Activated CD4-positive, alpha-beta T cell treated with anti-CD3 and anti-CD28 coated beads, Interleukin-2, amount 10 ng/mL, durations not matched to agents 24 days and 14 days (primary cell): ENCODE measurements at regions of chr22 and their contacts with region 1.

Region 1: DNA sequence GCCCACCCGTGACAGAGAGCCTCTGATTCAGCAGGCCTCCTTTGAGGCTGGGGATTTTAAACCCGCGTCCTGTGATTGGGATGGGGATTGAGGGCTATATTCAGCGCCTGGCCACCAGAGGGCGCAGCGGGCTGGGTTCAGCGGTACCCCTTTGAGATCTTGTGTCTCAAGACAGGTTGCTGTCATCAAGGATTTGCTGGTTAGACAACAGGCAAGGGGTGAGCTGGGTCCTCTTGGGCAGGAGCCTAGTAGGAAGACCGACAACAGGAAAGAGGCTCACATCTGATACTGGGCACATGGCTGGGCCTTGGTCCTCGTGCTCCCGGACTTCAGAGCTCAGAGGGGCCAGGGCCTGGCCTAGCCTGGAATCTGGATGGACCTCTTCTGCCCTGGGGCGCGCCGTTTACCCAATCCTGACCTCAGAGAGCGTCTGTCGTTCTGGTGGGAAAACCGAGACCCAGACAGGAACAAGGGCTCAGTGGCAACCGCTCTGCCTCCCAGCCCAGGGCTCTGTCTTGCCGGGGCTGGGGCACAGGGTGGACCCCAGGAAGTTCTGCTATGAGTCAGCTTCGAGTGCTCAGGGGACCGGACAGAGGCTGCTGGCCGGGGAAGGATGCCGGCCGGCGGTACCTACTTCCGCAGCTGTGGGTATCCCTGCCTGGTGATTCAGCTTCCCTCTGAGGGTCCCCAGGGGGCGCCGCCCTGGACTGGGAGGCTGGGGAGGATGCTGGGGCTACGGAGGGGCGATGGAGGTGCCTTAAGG is 929 bp upstream of the SLC35E4 start:
- DNase-seq: peak; percentile 97
- H3K4me3 Mint-ChIP-seq: peak overlapping the region; percentile 79
- H3K27ac Mint-ChIP-seq: peak overlapping the region; percentile 94
- H3K4me1 Mint-ChIP-seq: peaks cover 27% of the 10 kb centered on the region
- H3K27me3 Mint-ChIP-seq: no peaks in the 10 kb centered on the region

Region 2: DNA sequence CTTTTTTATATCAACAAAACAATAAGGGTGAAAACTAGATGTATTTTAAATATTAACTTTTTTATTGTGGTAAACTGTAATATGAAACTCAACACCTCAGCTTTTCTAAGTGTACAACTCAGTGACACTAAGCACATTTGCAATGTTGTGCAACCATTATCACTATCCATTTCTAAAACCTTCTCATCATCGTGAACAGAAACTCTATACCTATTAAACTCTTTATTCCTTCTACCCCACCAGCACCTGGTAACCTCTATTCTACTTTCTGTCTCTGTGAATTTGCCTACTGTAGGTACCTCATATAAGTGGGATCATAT is 545.0 kb before region 1 on chr22:
- intact Hi-C with region 1: no loop called
- DNase-seq: no peak
- H3K4me3 Mint-ChIP-seq: no peak overlapping the region
- H3K27ac Mint-ChIP-seq: no peak overlapping the region
- H3K4me1 Mint-ChIP-seq: peaks cover 24% of the 10 kb centered on the region
- H3K27me3 Mint-ChIP-seq: no peaks in the 10 kb centered on the region

Region 3: GRCh38 chr22:30386960-30387827 is 247.5 kb before region 1 on chr22 and contains the start of gene RNF215:
- intact Hi-C with region 1: no loop called
- DNase-seq: peak; percentile 96
- H3K4me3 Mint-ChIP-seq: peak within 1 kb of the TSS; percentile 86
- H3K27ac Mint-ChIP-seq: peak within 1 kb of the TSS; percentile 79
- H3K4me1 Mint-ChIP-seq: peaks cover 19% of the 10 kb centered on the region
- H3K27me3 Mint-ChIP-seq: no peaks in the 10 kb centered on the region
- total RNA-seq, gene RNF215: 10.4 and 15.2 TPM in 2 replicates

Region 4: DNA sequence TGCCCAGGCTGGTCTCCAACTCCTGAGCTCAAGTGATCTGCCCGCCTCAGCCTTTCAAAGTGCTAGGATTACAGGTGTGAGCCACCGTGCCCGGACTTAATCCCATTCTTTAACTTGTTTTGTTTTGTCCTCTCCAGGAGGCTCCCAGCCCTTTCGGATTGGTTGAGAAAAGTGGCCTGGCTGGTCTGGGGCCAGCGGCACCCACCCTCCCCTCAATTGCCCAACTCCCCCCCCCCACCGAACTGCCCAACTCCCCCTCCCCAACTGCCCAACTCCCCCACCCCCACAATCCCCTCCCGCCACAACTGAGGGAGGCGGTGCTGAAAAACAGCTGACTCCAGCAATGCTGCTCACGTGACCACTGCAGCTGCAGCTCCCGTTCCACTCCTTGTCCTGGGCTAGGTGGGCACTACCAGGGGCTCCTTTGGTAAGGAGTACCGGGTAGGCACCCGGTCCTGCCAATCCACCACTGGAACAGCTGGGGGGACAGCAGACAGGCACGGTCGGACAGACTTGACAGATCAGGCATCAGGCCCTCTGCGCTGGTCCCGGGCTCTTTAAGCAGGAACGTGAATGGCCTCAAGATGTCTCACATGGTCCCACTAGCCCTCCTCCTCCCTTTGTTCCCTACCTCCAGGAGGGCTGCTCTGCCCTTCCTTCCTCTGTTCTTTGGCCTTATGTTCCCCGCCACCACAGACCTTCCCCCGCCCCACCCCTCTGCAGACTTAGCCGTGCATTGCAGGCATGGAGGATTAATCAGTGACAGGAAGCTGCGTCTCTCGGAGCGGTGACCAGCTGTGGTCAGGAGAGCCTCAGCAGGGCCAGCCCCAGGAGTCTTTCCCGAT is 28.0 kb before region 1 on chr22 and contains the start of gene TCN2:
- intact Hi-C with region 1: loop called (anchors 2 kb)
- DNase-seq: peak; percentile 78
- H3K4me3 Mint-ChIP-seq: peak within 1 kb of the TSS; percentile 86
- H3K27ac Mint-ChIP-seq: peak within 1 kb of the TSS; percentile 85
- H3K4me1 Mint-ChIP-seq: peaks cover 47% of the 10 kb centered on the region
- H3K27me3 Mint-ChIP-seq: no peaks in the 10 kb centered on the region
- total RNA-seq, gene TCN2: 0.35 and 0.45 TPM in 2 replicates

Region 5: GRCh38 chr22:30655532-30655931 is 20.9 kb after region 1 on chr22:
- intact Hi-C with region 1: no loop called
- DNase-seq: no peak
- H3K4me3 Mint-ChIP-seq: no peak overlapping the region
- H3K27ac Mint-ChIP-seq: no peak overlapping the region
- H3K4me1 Mint-ChIP-seq: peaks cover 18% of the 10 kb centered on the region
- H3K27me3 Mint-ChIP-seq: no peaks in the 10 kb centered on the region

Region 6: GRCh38 chr22:30667494-30668385 is 33.1 kb after region 1 on chr22 and contains the start of gene DUSP18:
- intact Hi-C with region 1: loop called (anchors 1 kb)
- DNase-seq: peak; percentile 98
- H3K4me3 Mint-ChIP-seq: peak within 1 kb of the TSS; percentile 93
- H3K27ac Mint-ChIP-seq: peak within 1 kb of the TSS; percentile 92
- H3K4me1 Mint-ChIP-seq: peaks cover 29% of the 10 kb centered on the region
- H3K27me3 Mint-ChIP-seq: peaks cover 2% of the 10 kb centered on the region
- total RNA-seq, gene DUSP18: 8.0 and 10.3 TPM in 2 replicates

Region 7: GRCh38 chr22:30754971-30755756 is 120.5 kb after region 1 on chr22:
- intact Hi-C with region 1: loop called (anchors 1 kb)
- DNase-seq: peak; percentile 88
- H3K4me3 Mint-ChIP-seq: no peak overlapping the region
- H3K27ac Mint-ChIP-seq: no peak overlapping the region
- H3K4me1 Mint-ChIP-seq: peaks cover 2% of the 10 kb centered on the region
- H3K27me3 Mint-ChIP-seq: no peaks in the 10 kb centered on the region

Region 8: DNA sequence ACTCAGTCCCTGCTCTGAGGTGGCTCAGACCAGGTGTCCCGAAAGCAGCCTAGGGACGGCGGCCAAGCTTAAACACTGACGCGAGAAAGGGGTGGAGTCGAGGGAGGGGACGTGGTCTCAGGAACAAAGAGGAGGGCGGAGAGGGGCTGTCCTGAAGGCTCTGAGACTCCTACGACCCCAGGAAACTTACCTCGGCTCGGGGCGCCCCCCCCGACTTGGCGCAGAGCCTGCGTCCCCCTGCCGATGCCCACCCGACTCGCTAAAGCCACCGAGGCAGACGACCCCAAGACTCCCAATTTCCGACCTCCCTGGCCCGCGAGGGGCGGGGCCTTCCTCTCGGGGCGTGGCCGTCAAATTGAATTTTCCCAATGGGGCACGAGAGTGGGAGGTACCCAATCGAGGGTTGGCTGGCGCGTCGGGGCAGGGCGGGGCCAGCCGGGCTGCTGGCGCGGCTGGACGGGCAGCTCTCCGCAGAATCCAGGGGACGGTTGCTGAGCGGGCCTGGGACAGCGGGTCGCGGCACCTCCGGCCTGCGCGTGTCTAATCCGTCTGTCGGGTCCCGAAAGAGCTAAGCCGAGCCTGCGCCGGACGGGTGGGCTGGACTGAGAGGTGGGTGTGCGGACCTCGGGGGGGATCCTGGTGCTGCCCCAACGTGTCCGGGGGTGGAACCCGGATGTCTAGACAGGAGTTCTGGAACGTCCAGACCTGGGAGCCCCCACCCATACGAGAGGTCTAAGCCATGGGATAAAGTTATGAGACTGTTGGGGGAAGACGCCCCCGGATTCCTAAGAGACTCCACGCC is 446.4 kb after region 1 on chr22 and contains the start of gene SMTN:
- intact Hi-C with region 1: loop called (anchors 10 kb)
- DNase-seq: peak; percentile 98
- H3K4me3 Mint-ChIP-seq: peak within 1 kb of the TSS; percentile 91
- H3K27ac Mint-ChIP-seq: peak within 1 kb of the TSS; percentile 78
- H3K4me1 Mint-ChIP-seq: peaks cover 35% of the 10 kb centered on the region
- H3K27me3 Mint-ChIP-seq: no peaks in the 10 kb centered on the region
- total RNA-seq, gene SMTN: 13.9 and 17.9 TPM in 2 replicates